Tibial artery (tissue), 4 donors: ENCODE measurements at regions of chr3 and their contacts with region 1.

Region 1: DNA sequence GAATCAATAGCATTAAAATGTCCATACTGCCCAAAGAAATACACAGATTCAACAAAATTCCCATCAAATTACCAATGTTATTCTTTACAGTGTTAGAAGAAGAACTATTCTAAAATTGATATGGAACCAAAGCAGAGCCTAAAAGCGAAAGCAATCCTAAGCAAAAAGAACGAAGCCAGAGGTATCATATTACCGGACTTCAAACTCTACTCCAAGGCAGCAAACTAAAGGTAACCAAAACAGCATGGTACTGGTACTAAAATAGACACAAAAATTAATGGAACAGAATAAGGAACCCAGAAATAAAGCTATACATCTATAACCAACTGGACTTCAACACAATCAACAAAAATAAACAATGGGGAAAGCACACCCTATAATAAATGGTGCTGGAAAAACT is 167.5 kb downstream of the ADAMTS9 start:
- DNase-seq: no peak
- H3K4me3 ChIP-seq: no peak overlapping the region
- H3K27ac ChIP-seq: no peak overlapping the region
- H3K4me1 ChIP-seq: no peaks in the 10 kb centered on the region
- H3K27me3 ChIP-seq: no peaks in the 10 kb centered on the region
- CTCF ChIP-seq: no peak

Region 2: DNA sequence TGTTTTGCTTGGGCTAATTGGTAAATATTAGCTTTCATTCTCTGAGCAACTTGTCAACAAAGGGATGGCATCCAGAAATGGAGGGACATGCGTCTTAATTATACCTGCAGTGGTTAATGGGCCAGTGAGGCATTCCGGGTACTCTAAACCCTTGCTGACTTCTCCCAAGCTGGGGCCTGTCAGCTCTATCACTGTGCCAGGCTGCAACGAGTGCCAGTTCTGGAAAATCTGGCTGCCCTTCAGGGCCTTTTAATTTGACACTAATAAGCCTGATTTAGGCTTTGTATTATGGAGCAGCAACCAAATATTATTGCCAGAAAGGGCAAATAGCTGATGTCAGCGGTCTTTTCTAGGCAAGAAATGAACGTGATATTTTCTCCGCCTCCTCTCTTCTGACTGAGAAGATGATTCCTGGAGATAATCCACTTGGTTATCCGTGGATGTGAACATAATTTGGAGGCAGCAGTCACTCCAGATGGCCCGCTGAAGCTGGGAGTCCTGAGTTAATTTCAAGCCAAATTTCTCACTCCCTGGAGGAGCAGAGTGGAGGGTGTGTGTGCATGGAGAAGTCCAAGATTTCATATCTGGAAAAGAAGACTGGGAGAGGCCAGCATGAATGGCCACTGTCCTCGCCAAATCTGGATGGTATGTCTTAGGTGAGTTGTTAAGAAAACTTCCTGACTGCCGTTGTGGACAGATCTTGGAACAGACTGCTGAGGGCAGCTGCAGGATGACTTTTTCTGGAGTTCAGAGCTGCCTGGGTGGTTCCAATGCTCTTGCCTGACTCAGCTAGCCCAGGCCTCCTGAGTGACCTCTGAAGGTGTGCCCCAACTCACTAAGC is 452.6 kb before region 1 on chr3:
- intact Hi-C with region 1: no loop called
- DNase-seq: no peak
- H3K4me3 ChIP-seq: no peak overlapping the region
- H3K27ac ChIP-seq: no peak overlapping the region
- H3K4me1 ChIP-seq: no peaks in the 10 kb centered on the region
- H3K27me3 ChIP-seq: no peaks in the 10 kb centered on the region
- CTCF ChIP-seq: no peak

Region 3: DNA sequence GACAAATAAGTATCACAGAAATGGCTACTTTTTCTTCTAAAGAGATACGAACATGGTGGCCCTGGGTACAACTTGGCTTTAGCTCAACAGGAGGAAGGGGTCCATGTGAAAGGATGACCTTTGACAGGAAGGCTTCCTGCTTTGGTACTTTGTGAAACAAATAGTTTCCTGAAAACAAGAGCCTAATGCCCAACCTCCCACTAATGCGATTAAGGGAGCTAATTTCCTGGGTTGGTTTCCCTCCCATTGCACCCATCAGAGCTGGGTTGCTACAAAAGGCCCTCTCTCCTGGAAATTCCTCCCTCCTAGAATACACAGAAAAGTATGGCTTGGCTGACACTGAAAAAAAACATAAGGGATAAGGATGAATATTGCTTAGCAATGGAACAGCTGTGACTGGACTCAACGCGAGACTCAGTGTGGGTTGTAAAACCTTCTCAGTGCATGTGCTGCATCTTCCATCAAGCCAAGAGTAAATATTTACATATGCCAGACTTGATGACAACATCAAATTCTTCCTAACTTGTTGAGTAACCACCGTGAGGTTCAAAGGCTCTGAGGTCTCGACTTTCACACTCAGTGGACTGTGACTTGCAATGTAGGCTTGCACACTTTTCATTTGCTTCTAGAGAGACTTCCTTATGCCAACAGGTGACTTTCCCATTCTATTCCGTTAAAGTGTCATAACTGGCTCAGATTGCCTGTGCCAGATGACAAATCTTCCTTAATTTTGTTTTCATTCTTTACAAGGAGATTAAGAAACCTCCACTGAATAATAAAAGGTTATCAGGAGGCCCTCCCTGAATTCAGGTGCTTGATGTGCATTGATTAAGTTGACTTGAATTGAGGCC is 107.4 kb after region 1 on chr3:
- intact Hi-C with region 1: no loop called
- DNase-seq: no peak
- H3K4me3 ChIP-seq: no peak overlapping the region
- H3K27ac ChIP-seq: no peak overlapping the region
- H3K4me1 ChIP-seq: no peaks in the 10 kb centered on the region
- H3K27me3 ChIP-seq: no peaks in the 10 kb centered on the region
- CTCF ChIP-seq: no peak

Region 4: DNA sequence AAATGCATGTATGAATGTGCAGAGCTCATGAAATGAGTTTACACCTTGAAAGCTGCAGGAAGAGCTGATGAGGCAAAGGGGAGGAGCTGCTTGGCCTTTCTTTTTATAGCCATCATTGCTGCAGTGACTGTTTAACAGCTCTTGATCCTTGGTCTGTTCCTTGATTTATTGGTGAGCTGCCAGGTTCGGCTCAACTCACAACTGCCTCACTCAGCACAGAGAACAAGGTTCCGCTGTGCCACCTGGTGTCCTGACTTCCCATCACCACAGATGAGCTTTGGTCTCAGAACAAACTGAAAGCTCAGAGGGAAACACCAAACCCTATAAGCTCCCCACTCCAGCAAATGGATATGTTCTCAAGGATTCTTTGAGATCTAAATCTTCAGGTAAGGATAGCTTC is 892.3 kb after region 1 on chr3:
- intact Hi-C with region 1: loop called (anchors 10 kb)
- DNase-seq: no peak
- H3K4me3 ChIP-seq: no peak overlapping the region
- H3K27ac ChIP-seq: no peak overlapping the region
- H3K4me1 ChIP-seq: peaks cover 0 to 23% (median 13%) of the 10 kb centered on the region in 4 donors
- H3K27me3 ChIP-seq: no peaks in the 10 kb centered on the region
- CTCF ChIP-seq: peak in 1 of 2 experiments; percentile 21

Region 5: DNA sequence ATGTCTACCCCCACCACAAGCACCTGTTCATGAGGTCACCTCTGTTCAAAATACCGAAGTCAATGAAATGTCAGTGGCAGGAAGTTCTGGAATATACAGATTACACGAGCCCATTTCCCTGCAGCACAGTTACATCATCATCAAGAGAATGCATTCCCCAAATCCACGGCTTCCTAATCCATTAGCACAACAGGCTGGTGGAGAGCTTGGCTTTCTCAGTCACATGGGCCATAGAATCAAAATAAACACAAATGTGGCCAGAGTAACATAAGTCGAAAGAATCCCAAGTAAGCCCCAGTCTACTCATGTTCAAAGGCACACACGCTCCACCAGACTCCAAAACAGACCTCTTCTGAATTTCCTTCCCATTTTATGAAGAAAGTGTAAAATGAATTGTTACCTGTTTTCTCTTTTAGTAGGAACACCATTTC is 1099.1 kb after region 1 on chr3:
- intact Hi-C with region 1: no loop called
- DNase-seq: no peak
- H3K4me3 ChIP-seq: no peak overlapping the region
- H3K27ac ChIP-seq: peak overlapping the region; percentile 18 to 53
- H3K4me1 ChIP-seq: peaks cover 0 to 15% (median 3%) of the 10 kb centered on the region in 4 donors
- H3K27me3 ChIP-seq: no peaks in the 10 kb centered on the region
- CTCF ChIP-seq: no peak